AG04449 (cell line): ENCODE measurements at regions of chr6 and their contacts with region 1.

Region 1: GRCh38 chr6:118580585-118581419 is 32.7 kb downstream of the PLN start:
- DNase-seq: peak; percentile 33
- H3K4me3 ChIP-seq: no peak overlapping the region
- CTCF ChIP-seq: peak; percentile 54

Region 2: DNA sequence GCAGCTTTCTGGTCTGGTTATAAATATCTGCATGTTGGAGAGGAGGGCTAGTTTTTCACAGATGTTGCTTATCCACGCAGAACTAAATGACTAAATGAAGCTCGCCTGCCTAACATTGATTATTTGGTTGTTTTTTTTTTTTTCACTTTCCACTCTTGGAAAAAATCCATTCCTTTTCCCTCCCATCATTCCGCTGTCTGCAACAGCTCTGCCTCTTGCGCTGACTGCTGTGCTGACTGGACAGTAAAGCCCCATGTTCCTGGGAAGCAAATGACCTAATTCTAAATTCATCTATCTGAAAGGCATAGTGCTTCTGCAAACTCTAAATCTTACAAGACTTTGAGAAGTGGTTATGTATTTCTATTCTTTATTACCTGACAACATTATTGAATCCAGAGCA is 288.2 kb before region 1 on chr6:
- CTCF ChIA-PET with region 1: interaction called, 94 read pairs
- POLR2A ChIA-PET with region 1: no interaction called
- DNase-seq: no peak
- H3K4me3 ChIP-seq: no peak overlapping the region
- CTCF ChIP-seq: no peak

Region 3: DNA sequence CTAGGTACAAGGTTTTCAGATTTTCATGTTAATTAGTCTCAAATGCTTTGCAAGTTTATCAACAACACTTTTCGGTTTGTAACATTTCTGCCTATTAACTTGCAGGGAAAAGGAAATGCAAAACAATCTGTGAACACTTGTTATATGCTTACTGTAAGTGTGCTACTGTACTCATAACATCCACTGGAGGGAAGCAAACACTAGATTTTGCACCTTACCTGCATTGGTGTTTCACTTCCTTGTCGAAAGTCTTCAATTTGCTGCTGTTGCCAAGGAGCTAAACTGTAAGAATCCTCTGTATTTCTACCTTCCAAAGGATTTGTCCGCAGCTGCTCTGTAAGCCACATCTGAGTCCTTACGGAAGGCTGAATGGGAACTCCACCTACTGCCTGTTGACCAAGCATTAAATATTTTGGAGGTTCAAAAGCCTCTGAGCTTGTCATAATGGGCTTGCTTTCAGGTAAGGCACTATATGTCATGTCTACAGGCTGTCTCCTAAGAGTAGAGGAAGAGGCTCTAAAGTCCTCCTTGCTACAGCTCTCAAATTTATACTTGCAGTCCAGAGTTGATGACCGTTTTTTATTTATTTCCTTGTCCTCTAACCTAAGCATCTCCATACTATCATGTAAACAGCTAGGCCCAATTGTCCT is 15.4 kb before region 1 on chr6:
- CTCF ChIA-PET with region 1: interaction called, 23 read pairs
- POLR2A ChIA-PET with region 1: no interaction called
- DNase-seq: no peak
- H3K4me3 ChIP-seq: no peak overlapping the region
- CTCF ChIP-seq: peak; percentile 22

Region 4: GRCh38 chr6:118596774-118597320 is 16.0 kb after region 1 on chr6:
- CTCF ChIA-PET with region 1: interaction called, 11 read pairs
- POLR2A ChIA-PET with region 1: no interaction called
- DNase-seq: no peak
- H3K4me3 ChIP-seq: no peak overlapping the region
- CTCF ChIP-seq: no peak